ENCODE measurements at regions of chr16 and their contacts with region 1.

Region 1: GRCh38 chr16:14310519-14310991 is 239.4 kb downstream of the MRTFB start:
- DNase-seq: no peak
- ATAC-seq: no peak
- H3K4me3 Mint-ChIP-seq: no peak overlapping the region
- H3K27ac Mint-ChIP-seq: no peak overlapping the region
- H3K4me1 Mint-ChIP-seq: peaks cover 38% of the 10 kb centered on the region
- H3K27me3 Mint-ChIP-seq: no peaks in the 10 kb centered on the region
- CTCF ChIP-seq: no peak

Region 2: GRCh38 chr16:14285513-14286385 is 24.8 kb before region 1 on chr16:
- CTCF ChIA-PET with region 1: interaction called, 14 read pairs
- POLR2A ChIA-PET with region 1: interaction called, 6 read pairs
- intact Hi-C with region 1: no loop called
- DNase-seq: peak; percentile 92
- ATAC-seq: peak; percentile 81
- H3K4me3 Mint-ChIP-seq: peak overlapping the region; percentile 77
- H3K27ac Mint-ChIP-seq: peak overlapping the region; percentile 73
- H3K4me1 Mint-ChIP-seq: peaks cover 12% of the 10 kb centered on the region
- H3K27me3 Mint-ChIP-seq: no peaks in the 10 kb centered on the region
- CTCF ChIP-seq: no peak

Region 3: GRCh38 chr16:14298381-14299119 is 12.0 kb before region 1 on chr16:
- CTCF ChIA-PET with region 1: interaction called, 11 read pairs
- POLR2A ChIA-PET with region 1: no interaction called
- intact Hi-C with region 1: no loop called
- DNase-seq: no peak
- ATAC-seq: no peak
- H3K4me3 Mint-ChIP-seq: no peak overlapping the region
- H3K27ac Mint-ChIP-seq: no peak overlapping the region
- H3K4me1 Mint-ChIP-seq: peaks cover 11% of the 10 kb centered on the region
- H3K27me3 Mint-ChIP-seq: peaks cover 8% of the 10 kb centered on the region
- CTCF ChIP-seq: no peak

Measured in activated CD8-positive, alpha-beta T cell treated with anti-CD3 and anti-CD28 coated beads for 36 hours (primary cell).